Gastrocnemius medialis (tissue), 4 donors: ENCODE measurements at regions of chr4 and their contacts with region 1.

Region 1: DNA sequence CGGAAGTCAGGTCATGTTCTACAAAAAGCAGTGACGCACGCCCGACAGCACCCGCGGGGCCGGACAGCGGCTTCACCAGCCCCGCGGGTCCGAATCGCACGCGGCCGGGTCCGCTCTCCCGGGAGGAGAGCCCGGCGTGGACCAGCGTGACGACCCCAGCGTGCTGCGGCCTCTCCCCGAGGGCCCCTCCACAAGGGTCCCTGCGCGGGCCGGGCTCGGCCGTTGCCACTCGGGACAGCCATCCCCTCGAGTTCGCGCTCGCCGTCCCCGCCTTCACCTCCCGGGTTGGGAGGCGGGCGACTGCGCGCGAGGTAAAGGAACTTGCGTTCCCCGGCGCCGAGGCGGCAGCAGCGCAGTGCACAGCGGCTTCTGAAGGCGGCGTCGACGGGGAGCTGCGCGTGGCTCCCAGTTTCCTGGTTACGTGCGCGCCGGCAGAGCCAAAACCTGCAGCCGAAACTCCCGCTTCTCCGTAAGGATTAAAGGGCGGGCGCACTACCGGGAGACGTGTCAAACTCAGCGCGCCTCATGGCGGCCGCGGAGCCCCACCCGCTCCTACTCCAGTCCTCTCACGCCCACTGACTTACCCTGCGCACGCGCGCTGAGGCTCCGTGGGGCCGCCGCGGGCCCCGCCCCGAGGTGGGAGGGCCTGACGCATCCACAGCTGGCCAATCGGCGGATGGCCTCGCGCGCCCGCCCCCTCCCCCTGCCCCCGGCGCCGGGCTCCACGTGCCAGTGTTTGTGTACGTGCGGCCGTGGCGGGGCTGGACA is 416 bp upstream of the LRP2BP start:
- DNase-seq: peak; percentile 95 to 98
- ATAC-seq: peak; percentile 87 to 92
- H3K4me3 ChIP-seq: peak overlapping the region; percentile 83 to 95 (median 90)
- H3K27ac ChIP-seq: peak overlapping the region; percentile 98 to 100 (median 100)
- H3K4me1 ChIP-seq: peaks cover 22 to 28% of the 10 kb centered on the region in 2 donors
- H3K27me3 ChIP-seq: no peaks in the 10 kb centered on the region
- CTCF ChIP-seq: peak in 1 of 5 experiments; percentile 17
- POLR2A ChIP-seq: peak; percentile 88 to 94

Region 2: DNA sequence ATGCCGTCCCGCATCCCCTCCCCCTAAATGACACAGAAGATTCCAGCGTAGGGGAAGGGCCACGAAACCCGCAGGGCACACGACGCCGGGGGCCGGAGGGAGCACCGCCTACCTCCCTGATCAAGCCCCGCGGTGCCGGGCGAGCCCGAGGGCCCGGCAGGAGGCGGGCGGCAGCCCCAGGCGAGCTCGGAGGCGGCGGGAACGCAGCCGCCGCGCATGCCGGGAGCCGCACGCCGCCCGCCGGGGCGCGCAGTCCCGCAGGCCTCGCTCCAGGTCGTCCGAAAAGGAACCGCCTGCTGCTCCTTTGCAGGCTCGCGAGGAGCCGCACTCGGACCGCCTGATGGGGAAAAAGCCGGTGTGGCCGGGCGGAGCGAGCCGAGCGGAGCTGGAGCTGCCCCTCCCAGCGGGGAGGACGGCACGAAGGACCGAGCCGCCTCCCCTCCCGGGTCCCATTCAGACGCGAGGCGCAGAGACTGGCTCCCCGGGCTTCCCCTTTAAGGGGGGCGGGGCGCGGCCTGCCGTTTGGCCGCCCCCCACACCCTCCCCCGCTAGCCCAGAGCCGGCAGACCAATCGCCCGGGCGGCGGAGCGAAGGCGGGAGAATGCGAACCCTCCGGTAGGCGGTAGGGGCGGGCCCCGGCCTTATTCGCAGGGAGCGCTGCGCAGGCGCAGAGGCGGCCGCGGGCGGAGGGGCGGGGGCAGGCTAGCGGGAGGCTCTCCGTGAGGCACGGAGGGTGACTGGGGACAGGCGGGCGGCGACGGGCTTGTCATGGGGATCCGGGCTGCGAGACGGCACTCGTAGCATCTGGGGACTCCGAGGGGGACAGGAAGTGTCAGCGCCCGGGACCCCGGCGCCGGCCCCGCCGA is 1891.8 kb before region 1 on chr4:
- in situ Hi-C with region 1: no loop called
- intact Hi-C with region 1: loop called (anchors 10 kb)
- DNase-seq: peak; percentile 98 to 99
- ATAC-seq: peak; percentile 73 to 80
- H3K4me3 ChIP-seq: peak overlapping the region; percentile 89 to 96 (median 92)
- H3K27ac ChIP-seq: peak overlapping the region; percentile 90 to 97 (median 96)
- H3K4me1 ChIP-seq: peaks cover 18 to 19% of the 10 kb centered on the region in 2 donors
- H3K27me3 ChIP-seq: no peaks in the 10 kb centered on the region
- CTCF ChIP-seq: peak; percentile 8 to 57 (median 37)
- POLR2A ChIP-seq: peak; percentile 92 to 96

Region 3: GRCh38 chr4:183541010-183541751 is 1855.0 kb before region 1 on chr4:
- in situ Hi-C with region 1: no loop called
- intact Hi-C with region 1: no loop called
- DNase-seq: no peak
- ATAC-seq: no peak
- H3K4me3 ChIP-seq: peak overlapping the region in 1 of 4 donors; percentile 9
- H3K27ac ChIP-seq: no peak overlapping the region
- H3K4me1 ChIP-seq: no peaks in the 10 kb centered on the region
- H3K27me3 ChIP-seq: no peaks in the 10 kb centered on the region
- CTCF ChIP-seq: no peak
- POLR2A ChIP-seq: no peak

Region 4: DNA sequence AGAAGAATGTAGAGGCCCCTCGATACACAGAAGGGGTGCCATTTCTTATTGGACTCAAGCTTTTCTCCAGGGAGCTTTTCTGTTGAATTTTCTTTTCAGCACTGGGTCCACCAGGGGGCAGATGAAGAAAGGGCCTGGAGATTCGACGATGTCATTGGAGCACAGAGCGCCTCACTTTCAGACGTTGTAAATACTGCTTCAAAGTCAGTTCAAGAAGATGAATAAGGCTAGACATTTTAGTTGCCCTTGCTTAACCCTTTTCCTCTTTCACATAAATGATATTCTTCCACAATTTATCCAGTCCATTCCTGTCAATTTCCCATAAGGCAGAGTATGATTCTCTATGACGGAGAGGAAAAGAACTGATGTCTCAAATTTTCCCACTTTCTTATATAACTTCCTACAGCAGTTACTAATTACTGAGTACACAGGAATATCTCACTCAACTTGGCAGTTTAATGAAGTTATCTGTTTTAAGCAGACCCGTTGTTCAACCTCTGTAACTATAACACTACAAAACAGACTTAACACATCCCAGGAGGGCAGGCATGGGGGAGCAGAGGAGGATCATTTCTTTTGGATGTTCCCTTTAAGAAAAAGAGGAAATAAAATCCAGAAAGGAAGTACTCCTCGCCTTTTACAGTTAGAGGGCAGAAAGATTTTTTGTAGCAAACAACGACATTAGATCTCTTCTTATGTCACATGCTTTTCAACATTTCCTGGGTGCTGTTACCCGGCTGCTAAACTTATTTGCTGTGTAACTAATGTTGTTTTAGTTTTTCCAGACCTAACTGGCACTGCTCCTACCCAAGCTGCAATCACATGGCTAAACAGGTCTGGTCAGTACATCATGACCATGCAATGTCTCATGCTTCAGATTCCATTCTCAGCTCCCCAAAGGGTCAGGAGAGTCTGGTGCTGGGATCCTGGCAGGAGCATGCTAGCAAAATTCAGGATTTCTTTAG is 650.0 kb before region 1 on chr4:
- in situ Hi-C with region 1: no loop called
- intact Hi-C with region 1: loop called (anchors 10 kb)
- DNase-seq: peak; percentile 67 to 72
- ATAC-seq: peak; percentile 59 to 61
- H3K4me3 ChIP-seq: peak overlapping the region in 2 of 4 donors; percentile 7 to 15
- H3K27ac ChIP-seq: peak overlapping the region; percentile 74 to 85 (median 79)
- H3K4me1 ChIP-seq: peaks cover 29 to 31% of the 10 kb centered on the region in 2 donors
- H3K27me3 ChIP-seq: no peaks in the 10 kb centered on the region
- CTCF ChIP-seq: peak; percentile 65 to 79 (median 77)
- POLR2A ChIP-seq: peak in 1 of 2 donors; percentile 13

Region 5: DNA sequence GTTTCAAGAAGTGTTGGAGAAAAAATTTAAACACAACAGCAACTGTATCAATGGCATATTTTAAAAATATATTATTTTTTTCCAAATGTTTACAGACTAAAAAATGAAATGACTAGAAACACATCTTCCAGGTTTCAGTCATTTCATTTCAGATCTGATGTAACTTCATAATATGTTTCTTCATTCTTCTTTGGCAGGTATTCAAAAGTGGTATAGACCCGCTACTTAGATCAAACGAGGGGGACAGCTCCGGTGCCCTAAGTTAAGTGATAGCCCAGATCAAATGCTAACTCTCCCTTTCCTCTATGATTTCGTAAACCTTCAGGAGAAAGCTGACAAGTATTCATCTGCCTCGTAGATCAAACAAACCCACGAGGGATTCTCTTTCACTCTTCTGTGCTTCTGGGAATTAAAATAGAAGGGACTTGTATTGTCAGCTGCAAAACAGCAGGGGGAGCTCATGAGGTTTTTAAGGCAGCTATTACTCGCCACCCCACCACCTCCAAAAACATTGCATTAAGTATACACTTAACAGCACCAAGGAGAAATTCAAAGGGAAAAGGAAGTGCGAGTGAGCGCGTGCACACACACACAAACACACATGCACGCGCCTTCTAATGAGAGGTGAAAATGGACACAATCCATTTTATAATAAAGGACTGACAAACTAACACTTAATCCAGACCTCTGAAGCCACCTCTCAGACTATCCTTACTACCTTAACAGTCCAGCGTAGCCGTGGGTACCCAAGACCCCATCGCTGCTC is 356.4 kb before region 1 on chr4:
- in situ Hi-C with region 1: no loop called
- intact Hi-C with region 1: no loop called
- DNase-seq: peak; percentile 27 to 38
- ATAC-seq: peak; percentile 89 to 95
- H3K4me3 ChIP-seq: peak overlapping the region in 2 of 4 donors; percentile 20 to 34
- H3K27ac ChIP-seq: no peak overlapping the region
- H3K4me1 ChIP-seq: no peaks in the 10 kb centered on the region
- H3K27me3 ChIP-seq: no peaks in the 10 kb centered on the region
- CTCF ChIP-seq: peak; percentile 71 to 87 (median 84)
- POLR2A ChIP-seq: no peak

Region 6: GRCh38 chr4:185142912-185143595 is 253.1 kb before region 1 on chr4 and contains the start of gene SLC25A4:
- in situ Hi-C with region 1: no loop called
- intact Hi-C with region 1: loop called (anchors 1 kb)
- DNase-seq: peak; percentile 82 to 92
- ATAC-seq: peak; percentile 71 to 77
- H3K4me3 ChIP-seq: peak within 1 kb of the TSS; percentile 72 to 81 (median 74)
- H3K27ac ChIP-seq: peak within 1 kb of the TSS; percentile 94 to 99 (median 97)
- H3K4me1 ChIP-seq: peaks cover 74 to 75% of the 10 kb centered on the region in 2 donors
- H3K27me3 ChIP-seq: no peaks in the 10 kb centered on the region
- CTCF ChIP-seq: peak in 4 of 5 experiments; percentile 55 to 77 (median 66)
- POLR2A ChIP-seq: peak; percentile 99 to 100
- total RNA-seq, gene SLC25A4: 360 to 914 (median 389) TPM

Region 7: DNA sequence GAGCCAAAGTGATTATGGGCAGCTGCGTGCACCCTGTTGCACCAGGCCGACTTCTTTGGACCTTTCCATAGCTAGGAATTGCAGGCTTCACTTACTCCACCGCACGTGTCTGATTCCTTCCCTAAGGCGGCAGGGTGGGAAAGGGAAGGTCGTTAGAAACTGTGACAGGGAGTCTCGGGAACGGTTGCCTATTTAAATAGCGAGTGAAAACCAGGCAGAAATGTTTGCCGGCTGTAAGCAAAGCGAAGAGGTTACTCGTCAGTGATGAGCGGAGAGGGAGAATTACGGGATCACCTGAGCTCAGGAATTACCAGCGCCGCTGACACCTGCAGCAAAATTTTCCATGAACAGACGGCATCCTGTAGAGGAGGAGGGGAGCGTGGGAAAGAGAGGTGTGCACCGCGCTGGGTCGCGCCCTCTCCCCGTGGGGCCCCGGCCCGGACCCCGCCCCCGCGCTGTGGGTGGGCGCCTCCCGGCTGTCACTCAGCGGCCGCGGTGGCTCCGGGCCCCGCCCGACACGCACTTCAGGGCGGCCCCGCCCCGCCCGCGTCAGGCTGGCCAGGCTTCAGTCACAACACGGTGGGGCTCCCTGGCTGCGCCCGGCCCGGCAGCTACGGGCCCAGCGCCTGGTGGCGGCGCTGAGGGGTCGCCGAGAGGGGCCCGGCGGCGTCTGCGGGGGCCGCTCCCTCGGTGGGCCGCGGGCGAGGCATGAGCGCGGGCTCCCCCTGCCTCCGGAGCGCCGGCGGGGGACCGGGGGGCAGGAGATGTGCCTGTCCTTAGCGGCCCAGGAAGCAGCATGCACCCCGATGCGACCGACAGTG is 186.9 kb before region 1 on chr4 and contains the start of gene SNX25:
- in situ Hi-C with region 1: loop called in 3 of 4 experiments (anchors 10 to 25 kb)
- intact Hi-C with region 1: loop called (anchors 1 kb)
- DNase-seq: peak; percentile 69 to 80
- ATAC-seq: peak; percentile 86 to 89
- H3K4me3 ChIP-seq: peak within 1 kb of the TSS; percentile 56 to 80 (median 68)
- H3K27ac ChIP-seq: peak within 1 kb of the TSS; percentile 75 to 90 (median 82)
- H3K4me1 ChIP-seq: peaks cover 20 to 25% of the 10 kb centered on the region in 2 donors
- H3K27me3 ChIP-seq: no peaks in the 10 kb centered on the region
- CTCF ChIP-seq: peak in 4 of 5 experiments; percentile 13 to 54 (median 34)
- POLR2A ChIP-seq: peak; percentile 94 to 97
- total RNA-seq, gene SNX25: 11.3 to 17.3 (median 13.4) TPM

Region 8: GRCh38 chr4:185471235-185472102 is 75.3 kb after region 1 on chr4 and contains the start of gene CCDC110:
- in situ Hi-C with region 1: no loop called
- intact Hi-C with region 1: loop called (anchors 1 kb)
- DNase-seq: peak; percentile 92 to 94
- ATAC-seq: peak; percentile 84 to 88
- H3K4me3 ChIP-seq: peak within 1 kb of the TSS; percentile 74 to 94 (median 83)
- H3K27ac ChIP-seq: peak within 1 kb of the TSS; percentile 79 to 83 (median 80)
- H3K4me1 ChIP-seq: peaks cover 0 to 4% of the 10 kb centered on the region in 2 donors
- H3K27me3 ChIP-seq: no peaks in the 10 kb centered on the region
- CTCF ChIP-seq: peak; percentile 63 to 90 (median 75)
- POLR2A ChIP-seq: peak; percentile 67 to 75
- total RNA-seq, gene CCDC110: 0.97 to 4.1 (median 1.8) TPM

Region 9: DNA sequence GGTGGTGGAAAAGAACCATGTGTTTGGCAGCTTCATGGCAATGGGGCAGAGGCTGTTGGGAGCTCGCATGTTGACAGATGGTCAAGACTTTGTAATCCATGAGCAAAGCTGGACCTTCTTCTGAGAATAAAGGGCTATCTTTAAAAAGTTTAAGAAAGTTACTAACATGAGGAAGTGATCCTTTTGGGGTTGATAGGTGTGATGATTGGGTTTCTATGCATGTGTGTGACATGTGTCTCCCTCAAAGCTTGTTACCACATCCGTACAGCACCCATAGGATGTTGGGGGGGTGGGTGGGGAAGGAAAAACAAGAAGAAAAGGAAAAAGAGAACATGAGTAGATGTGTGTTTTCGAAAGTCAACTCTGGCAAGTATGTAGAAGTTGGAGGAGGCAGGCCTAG is 549.8 kb after region 1 on chr4:
- in situ Hi-C with region 1: no loop called
- intact Hi-C with region 1: no loop called
- DNase-seq: no peak
- ATAC-seq: no peak
- H3K4me3 ChIP-seq: no peak overlapping the region
- H3K27ac ChIP-seq: no peak overlapping the region
- H3K4me1 ChIP-seq: no peaks in the 10 kb centered on the region
- H3K27me3 ChIP-seq: no peaks in the 10 kb centered on the region
- CTCF ChIP-seq: no peak
- POLR2A ChIP-seq: no peak